ENCODE measurements at regions of chr9 and their contacts with region 1.

Region 1: GRCh38 chr9:87662808-87663528 is 63.0 kb upstream of the CTSL start:
- DNase-seq: peak; percentile 71 to 73
- H3K4me3 ChIP-seq: no peak overlapping the region
- H3K27ac ChIP-seq: no peak overlapping the region
- H3K4me1 ChIP-seq: no peaks in the 10 kb centered on the region
- H3K27me3 ChIP-seq: no peaks in the 10 kb centered on the region
- CTCF ChIP-seq: peak; percentile 60 to 72 (median 64)
- POLR2A ChIP-seq: no peak

Region 2: DNA sequence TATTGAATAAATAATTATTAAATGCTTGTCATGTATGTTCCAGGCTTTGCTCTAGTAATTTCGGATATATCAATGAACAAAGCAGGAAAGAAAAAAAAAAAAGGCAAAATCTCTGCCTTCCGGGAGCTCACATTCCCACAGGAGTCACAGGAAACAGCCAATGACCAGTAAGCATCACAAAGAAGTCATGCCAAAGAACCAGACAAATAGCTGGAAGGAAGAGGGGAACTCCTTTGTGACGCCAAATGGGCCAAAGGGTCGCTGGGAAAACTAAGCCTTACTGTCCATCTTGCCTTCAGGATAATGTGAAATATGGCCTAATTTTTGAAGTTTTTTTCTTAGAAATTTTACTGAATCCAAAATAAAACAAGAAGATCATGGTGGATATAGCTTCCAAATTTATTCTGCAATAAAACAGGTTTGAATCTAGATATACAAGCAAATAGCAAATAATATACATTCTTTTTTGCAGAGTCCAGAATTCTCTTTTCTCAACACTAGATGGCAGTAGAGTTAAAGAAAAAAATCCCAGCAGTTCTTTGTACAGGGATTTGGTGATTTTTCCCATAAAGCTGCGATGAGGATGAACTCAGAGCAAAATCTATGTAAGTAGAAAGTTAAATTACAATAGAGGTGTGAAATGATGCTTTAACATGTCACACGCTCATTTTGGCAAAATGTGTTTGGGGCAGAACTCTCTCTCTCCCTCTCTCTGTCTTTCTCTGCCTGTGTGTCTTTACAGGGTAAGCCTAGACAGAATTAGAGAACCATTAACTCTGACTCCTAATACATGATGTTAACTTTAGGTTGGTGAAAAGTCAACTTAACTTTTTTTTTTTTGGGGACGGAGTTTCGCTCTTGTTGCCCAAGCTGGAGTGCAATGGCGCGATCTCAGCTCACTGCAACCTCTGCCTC is 1248.7 kb before region 1 on chr9:
- intact Hi-C with region 1: loop called (anchors 10 kb)
- DNase-seq: no peak
- H3K4me3 ChIP-seq: no peak overlapping the region
- H3K27ac ChIP-seq: no peak overlapping the region
- H3K4me1 ChIP-seq: no peaks in the 10 kb centered on the region
- H3K27me3 ChIP-seq: no peaks in the 10 kb centered on the region
- CTCF ChIP-seq: peak; percentile 61 to 73 (median 71)
- POLR2A ChIP-seq: no peak